ENCODE measurements at regions of chr4 and their contacts with region 1.

Region 1: GRCh38 chr4:168153596-168154440 is 61.5 kb downstream of the ANXA10 start:
- DNase-seq: peak; percentile 61
- H3K4me3 ChIP-seq: peak overlapping the region; percentile 28
- H3K27ac ChIP-seq: no peak overlapping the region
- H3K27me3 ChIP-seq: no peaks in the 10 kb centered on the region
- CTCF ChIP-seq: peak; percentile 80

Region 2: DNA sequence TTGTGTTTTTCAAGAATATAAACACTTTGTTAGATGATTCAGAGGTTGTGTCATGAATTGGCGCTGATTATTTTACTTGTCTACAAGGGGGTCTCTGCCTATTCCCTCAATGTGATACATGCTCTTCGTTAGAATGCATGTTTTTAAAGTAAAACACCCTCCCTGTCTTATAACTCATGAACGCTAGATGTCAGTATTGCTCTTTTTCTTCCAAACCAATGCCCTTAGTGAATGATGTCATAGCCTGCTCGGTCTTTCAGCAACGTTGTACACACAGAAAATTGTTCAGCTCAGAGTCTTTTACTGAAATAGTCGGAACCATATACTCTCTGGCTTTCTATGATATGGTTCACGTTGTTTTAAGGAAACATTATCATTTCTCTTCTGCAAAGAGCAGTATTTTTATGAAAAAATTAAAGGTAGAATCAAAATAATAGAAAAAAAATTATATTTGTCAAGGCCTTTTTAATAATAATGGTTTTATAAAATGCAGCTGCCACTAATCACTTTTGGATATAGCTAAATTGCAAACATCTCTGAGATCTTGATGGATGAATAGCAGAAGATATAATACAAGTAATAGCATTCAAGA is 1987.9 kb before region 1 on chr4:
- CTCF ChIA-PET with region 1: interaction called, 10 read pairs
- POLR2A ChIA-PET with region 1: no interaction called
- DNase-seq: peak; percentile 16
- H3K4me3 ChIP-seq: no peak overlapping the region
- H3K27ac ChIP-seq: no peak overlapping the region
- H3K27me3 ChIP-seq: no peaks in the 10 kb centered on the region
- CTCF ChIP-seq: peak; percentile 71

Region 3: DNA sequence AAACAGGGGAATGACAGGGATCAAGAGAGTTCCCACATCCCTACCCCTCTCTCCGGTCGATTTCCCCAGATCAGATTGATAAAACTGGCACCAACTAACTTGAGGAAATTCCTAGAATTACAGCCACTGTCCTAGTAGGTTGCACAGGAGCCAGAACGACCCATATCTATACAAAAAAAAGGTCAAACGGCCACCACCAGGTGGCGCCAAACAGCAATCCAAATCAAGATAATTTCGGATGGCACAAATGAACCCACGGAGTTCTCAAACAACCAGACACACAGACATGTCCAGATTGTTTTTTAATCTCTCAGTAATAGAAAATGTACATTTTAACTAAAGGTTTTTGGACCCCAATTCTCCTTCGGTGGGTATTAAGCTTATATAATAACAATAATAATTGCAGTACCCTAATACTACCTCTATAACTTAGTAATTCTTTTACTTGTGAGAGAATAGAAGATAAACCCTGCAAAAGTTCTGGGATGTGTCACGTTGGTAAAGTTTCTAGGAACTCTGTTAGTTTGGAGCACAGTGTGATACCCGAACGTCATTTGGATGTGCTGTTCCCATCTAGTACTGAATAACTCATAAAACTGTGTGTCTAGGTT is 1132.2 kb before region 1 on chr4:
- CTCF ChIA-PET with region 1: interaction called, 16 read pairs
- POLR2A ChIA-PET with region 1: no interaction called
- DNase-seq: peak; percentile 7
- H3K4me3 ChIP-seq: no peak overlapping the region
- H3K27ac ChIP-seq: no peak overlapping the region
- H3K27me3 ChIP-seq: no peaks in the 10 kb centered on the region
- CTCF ChIP-seq: peak; percentile 80

Region 4: GRCh38 chr4:167622481-167623246 is 531.2 kb before region 1 on chr4:
- CTCF ChIA-PET with region 1: interaction called, 10 read pairs
- POLR2A ChIA-PET with region 1: no interaction called
- DNase-seq: peak; percentile 3
- H3K4me3 ChIP-seq: no peak overlapping the region
- H3K27ac ChIP-seq: no peak overlapping the region
- H3K27me3 ChIP-seq: no peaks in the 10 kb centered on the region
- CTCF ChIP-seq: peak; percentile 81

Region 5: GRCh38 chr4:168139336-168139735 is 14.5 kb before region 1 on chr4:
- CTCF ChIA-PET with region 1: interaction called, 20 read pairs
- POLR2A ChIA-PET with region 1: no interaction called
- DNase-seq: no peak
- H3K4me3 ChIP-seq: no peak overlapping the region
- H3K27ac ChIP-seq: no peak overlapping the region
- H3K27me3 ChIP-seq: no peaks in the 10 kb centered on the region
- CTCF ChIP-seq: no peak

Region 6: DNA sequence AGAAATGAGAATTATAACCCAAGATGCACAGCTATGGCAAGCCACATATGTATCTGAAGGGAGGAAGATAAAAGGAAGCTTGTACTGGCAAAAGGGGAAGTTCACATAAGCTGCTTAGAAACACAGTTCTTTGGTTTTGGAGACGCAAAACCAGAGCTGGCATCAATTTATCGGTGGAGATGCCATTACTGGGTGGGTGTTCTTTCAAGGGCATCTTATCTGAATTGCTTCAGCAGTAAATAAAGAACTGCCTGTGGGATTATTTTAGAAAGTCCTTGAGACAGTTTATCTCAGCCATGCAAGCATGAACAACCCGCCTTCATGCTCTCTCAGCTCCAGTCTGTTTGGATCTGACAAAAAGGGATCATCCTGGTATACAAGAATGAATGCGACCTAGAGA is 104.0 kb after region 1 on chr4:
- CTCF ChIA-PET with region 1: no interaction called
- POLR2A ChIA-PET with region 1: no interaction called
- DNase-seq: no peak
- H3K4me3 ChIP-seq: no peak overlapping the region
- H3K27ac ChIP-seq: no peak overlapping the region
- H3K27me3 ChIP-seq: no peaks in the 10 kb centered on the region
- CTCF ChIP-seq: no peak

Measured in AG04450 (cell line).